CD4-positive, alpha-beta T cell (primary cell): ENCODE measurements at regions of chr12 and their contacts with region 1.

Region 1: DNA sequence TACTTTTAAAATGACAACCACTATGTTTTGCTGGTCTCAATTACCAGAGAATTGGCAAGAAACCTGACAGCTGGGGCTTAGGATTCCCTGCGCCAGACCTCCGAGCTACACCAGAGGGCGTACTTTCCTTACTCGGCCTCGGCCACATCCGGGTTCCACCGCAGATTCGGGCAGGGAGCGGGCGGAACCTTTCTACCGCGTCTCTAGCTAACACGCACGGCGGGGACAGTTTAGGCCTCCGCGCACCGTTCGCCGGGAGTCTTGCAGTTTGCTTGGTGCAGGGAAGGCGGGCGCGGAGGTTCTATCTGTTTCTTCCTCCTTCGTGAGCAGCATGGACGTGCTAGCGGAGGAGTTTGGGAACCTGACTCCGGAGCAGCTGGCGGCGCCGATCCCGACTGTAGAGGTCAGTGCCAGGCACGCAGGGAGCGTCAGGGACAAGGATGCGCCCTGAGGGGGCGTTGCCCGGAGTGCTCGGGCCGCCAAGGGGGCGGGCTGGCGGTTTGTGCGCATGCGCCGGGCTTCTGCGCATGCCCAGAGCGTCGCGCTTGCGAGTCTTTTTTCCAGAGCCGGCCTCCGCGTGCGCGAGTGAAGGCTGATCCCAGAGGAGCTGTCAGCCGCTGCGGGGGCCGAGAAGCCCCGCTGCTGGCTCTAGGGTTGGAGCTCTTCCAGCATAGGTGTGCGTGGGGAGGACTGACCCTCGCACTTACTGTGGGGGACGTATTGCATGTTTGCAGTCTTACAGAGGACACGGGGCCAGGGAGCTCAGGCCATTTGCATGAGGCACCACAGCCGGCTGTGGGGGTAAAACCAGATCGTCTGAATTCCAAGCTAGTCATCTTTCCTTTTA is at the start of gene POLR3B:
- DNase-seq: peak; percentile 93 to 98 (median 95)
- ATAC-seq: peak; percentile 93
- H3K4me3 ChIP-seq: peak within 1 kb of the TSS; percentile 66
- H3K4me3 Mint-ChIP-seq: peak within 1 kb of the TSS; percentile 86
- H3K27ac ChIP-seq: peak within 1 kb of the TSS; percentile 64 to 78
- H3K27ac Mint-ChIP-seq: peak within 1 kb of the TSS; percentile 83
- H3K4me1 ChIP-seq: peaks cover 12% of the 10 kb centered on the region
- H3K4me1 Mint-ChIP-seq: peaks cover 18% of the 10 kb centered on the region
- H3K27me3 ChIP-seq: no peaks in the 10 kb centered on the region
- H3K27me3 Mint-ChIP-seq: no peaks in the 10 kb centered on the region
- CTCF ChIP-seq: peak; percentile 88
- total RNA-seq, gene POLR3B: 2.5 to 2.6 TPM

Region 2: DNA sequence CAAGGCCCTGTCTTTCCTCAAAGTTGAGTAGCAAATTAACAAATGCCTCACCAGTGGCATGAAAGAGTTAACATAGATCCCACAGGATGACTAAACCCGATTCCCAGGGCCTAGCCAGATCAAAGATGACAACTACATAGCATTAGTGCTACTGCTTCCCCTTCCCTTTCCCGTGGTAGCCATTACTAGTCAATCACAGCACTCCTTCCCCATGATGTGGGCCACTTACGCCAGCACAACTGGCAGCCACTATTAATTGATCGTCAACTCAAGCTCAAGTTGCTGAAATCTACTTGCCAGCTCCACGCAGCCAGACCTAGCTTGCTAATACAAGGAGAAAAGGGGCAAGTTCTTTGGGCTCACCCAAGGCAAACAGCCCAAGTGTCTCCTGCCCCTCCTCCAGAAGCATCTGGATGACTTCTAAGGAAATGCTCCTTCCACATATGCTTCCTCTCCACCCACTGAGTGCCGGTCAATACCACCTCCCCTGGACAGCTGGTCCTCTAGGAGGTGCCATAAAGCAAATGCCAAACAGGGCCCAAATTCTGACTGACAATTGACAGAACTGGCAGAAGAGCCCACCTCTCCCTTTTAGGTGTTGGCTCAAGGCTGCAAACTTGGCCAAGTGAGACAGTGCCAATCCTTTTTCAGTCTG is 291.6 kb before region 1 on chr12:
- CTCF ChIA-PET with region 1: no interaction called
- POLR2A ChIA-PET with region 1: no interaction called
- intact Hi-C with region 1: no loop called
- DNase-seq: no peak
- ATAC-seq: no peak
- H3K4me3 ChIP-seq: no peak overlapping the region
- H3K4me3 Mint-ChIP-seq: no peak overlapping the region
- H3K27ac ChIP-seq: no peak overlapping the region
- H3K27ac Mint-ChIP-seq: no peak overlapping the region
- H3K4me1 ChIP-seq: no peaks in the 10 kb centered on the region
- H3K4me1 Mint-ChIP-seq: no peaks in the 10 kb centered on the region
- H3K27me3 ChIP-seq: peaks cover 0 to 2% of the 10 kb centered on the region in 2 experiments
- H3K27me3 Mint-ChIP-seq: peaks cover 6% of the 10 kb centered on the region
- CTCF ChIP-seq: no peak

Region 3: DNA sequence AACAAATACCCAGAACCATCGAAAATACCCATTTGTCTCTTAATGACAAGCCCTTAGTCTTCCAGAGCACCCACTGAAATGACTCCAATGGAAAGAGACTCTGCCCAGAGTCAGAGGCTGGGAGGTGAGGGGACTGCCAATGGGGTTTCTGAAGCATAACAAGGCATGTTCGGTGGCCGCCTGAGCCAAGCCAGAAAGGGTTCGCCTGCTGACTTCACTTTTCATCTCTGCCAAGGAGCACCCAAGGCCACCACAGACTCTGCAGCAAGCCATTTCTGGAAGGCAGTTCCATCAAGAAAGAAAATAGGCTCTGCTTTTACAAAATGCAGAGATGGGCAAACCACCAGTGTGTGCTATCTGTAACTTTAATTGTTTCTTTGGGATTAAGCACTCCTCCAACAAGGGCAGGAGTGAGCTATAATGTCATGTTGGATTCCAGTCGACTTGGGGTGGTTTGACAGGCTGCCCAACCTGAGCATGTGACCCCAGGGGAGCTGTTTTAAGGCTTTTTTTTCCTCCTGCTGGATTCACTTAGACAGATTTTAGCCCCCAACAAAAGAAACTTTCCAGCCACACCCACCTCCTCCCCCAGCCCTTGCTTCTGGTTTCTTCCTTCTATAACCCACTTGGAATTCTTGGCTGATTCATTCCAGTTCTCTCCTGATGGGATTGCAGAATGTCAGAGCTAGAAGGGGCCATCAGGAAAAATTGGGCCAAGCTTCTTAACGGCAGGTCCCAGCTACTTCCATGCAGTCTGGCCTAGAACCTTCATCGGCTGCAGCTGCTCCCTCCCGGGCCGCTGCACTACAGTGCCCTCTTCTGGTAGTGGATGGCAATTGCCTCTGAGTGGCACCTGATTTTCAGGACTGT is 134.1 kb before region 1 on chr12:
- CTCF ChIA-PET with region 1: interaction called, 16 read pairs
- POLR2A ChIA-PET with region 1: interaction called, 5 read pairs
- intact Hi-C with region 1: loop called (anchors 2 kb)
- DNase-seq: peak; percentile 57 to 83 (median 69)
- ATAC-seq: peak; percentile 62
- H3K4me3 ChIP-seq: no peak overlapping the region
- H3K4me3 Mint-ChIP-seq: no peak overlapping the region
- H3K27ac ChIP-seq: no peak overlapping the region
- H3K27ac Mint-ChIP-seq: no peak overlapping the region
- H3K4me1 ChIP-seq: peaks cover 20% of the 10 kb centered on the region
- H3K4me1 Mint-ChIP-seq: peaks cover 21% of the 10 kb centered on the region
- H3K27me3 ChIP-seq: peaks cover 0 to 5% of the 10 kb centered on the region in 2 experiments
- H3K27me3 Mint-ChIP-seq: peaks cover 5% of the 10 kb centered on the region
- CTCF ChIP-seq: peak; percentile 91

Region 4: GRCh38 chr12:106302401-106303201 is 55.2 kb before region 1 on chr12 and contains the start of gene TCP11L2:
- CTCF ChIA-PET with region 1: interaction called, 13 read pairs
- POLR2A ChIA-PET with region 1: interaction called, 81 read pairs
- intact Hi-C with region 1: loop called (anchors 1 to 5 kb)
- DNase-seq: peak; percentile 89 to 97 (median 92)
- ATAC-seq: peak; percentile 49
- H3K4me3 ChIP-seq: peak within 1 kb of the TSS; percentile 97
- H3K4me3 Mint-ChIP-seq: peak within 1 kb of the TSS; percentile 99
- H3K27ac ChIP-seq: peak within 1 kb of the TSS; percentile 99 to 100
- H3K27ac Mint-ChIP-seq: peak within 1 kb of the TSS; percentile 99
- H3K4me1 ChIP-seq: peaks cover 49% of the 10 kb centered on the region
- H3K4me1 Mint-ChIP-seq: peaks cover 64% of the 10 kb centered on the region
- H3K27me3 ChIP-seq: no peaks in the 10 kb centered on the region
- H3K27me3 Mint-ChIP-seq: no peaks in the 10 kb centered on the region
- CTCF ChIP-seq: no peak
- total RNA-seq, gene TCP11L2: 139 to 144 TPM

Region 5: GRCh38 chr12:106345739-106346138 is 12.0 kb before region 1 on chr12:
- CTCF ChIA-PET with region 1: interaction called, 10 read pairs
- POLR2A ChIA-PET with region 1: interaction called, 5 read pairs
- intact Hi-C with region 1: no loop called
- DNase-seq: peak in 3 of 14 experiments; percentile 17 to 38 (median 30)
- ATAC-seq: no peak
- H3K4me3 ChIP-seq: no peak overlapping the region
- H3K4me3 Mint-ChIP-seq: no peak overlapping the region
- H3K27ac ChIP-seq: no peak overlapping the region
- H3K27ac Mint-ChIP-seq: peak overlapping the region; percentile 59
- H3K4me1 ChIP-seq: no peaks in the 10 kb centered on the region
- H3K4me1 Mint-ChIP-seq: peaks cover 4% of the 10 kb centered on the region
- H3K27me3 ChIP-seq: no peaks in the 10 kb centered on the region
- H3K27me3 Mint-ChIP-seq: no peaks in the 10 kb centered on the region
- CTCF ChIP-seq: no peak

Region 6: GRCh38 chr12:106841510-106842302 is 483.9 kb after region 1 on chr12:
- CTCF ChIA-PET with region 1: interaction called, 12 read pairs
- POLR2A ChIA-PET with region 1: interaction called, 4 read pairs
- intact Hi-C with region 1: no loop called
- DNase-seq: peak in 12 of 14 experiments; percentile 2 to 68 (median 18)
- ATAC-seq: no peak
- H3K4me3 ChIP-seq: no peak overlapping the region
- H3K4me3 Mint-ChIP-seq: no peak overlapping the region
- H3K27ac ChIP-seq: no peak overlapping the region
- H3K27ac Mint-ChIP-seq: peak overlapping the region; percentile 15
- H3K4me1 ChIP-seq: no peaks in the 10 kb centered on the region
- H3K4me1 Mint-ChIP-seq: peaks cover 25% of the 10 kb centered on the region
- H3K27me3 ChIP-seq: no peaks in the 10 kb centered on the region
- H3K27me3 Mint-ChIP-seq: no peaks in the 10 kb centered on the region
- CTCF ChIP-seq: peak; percentile 68

Region 7: GRCh38 chr12:106955377-106956047 is 597.7 kb after region 1 on chr12 and contains the start of gene TMEM263:
- CTCF ChIA-PET with region 1: interaction called, 4 read pairs
- POLR2A ChIA-PET with region 1: interaction called, 32 read pairs
- intact Hi-C with region 1: no loop called
- DNase-seq: peak; percentile 74 to 97 (median 88)
- ATAC-seq: peak; percentile 73
- H3K4me3 ChIP-seq: peak within 1 kb of the TSS; percentile 77
- H3K4me3 Mint-ChIP-seq: peak within 1 kb of the TSS; percentile 98
- H3K27ac ChIP-seq: peak within 1 kb of the TSS; percentile 81 to 89
- H3K27ac Mint-ChIP-seq: peak within 1 kb of the TSS; percentile 98
- H3K4me1 ChIP-seq: peaks cover 13% of the 10 kb centered on the region
- H3K4me1 Mint-ChIP-seq: peaks cover 43% of the 10 kb centered on the region
- H3K27me3 ChIP-seq: no peaks in the 10 kb centered on the region
- H3K27me3 Mint-ChIP-seq: no peaks in the 10 kb centered on the region
- CTCF ChIP-seq: no peak
- total RNA-seq, gene TMEM263: 33.2 to 33.4 TPM